Kidney (tissue), 22 donors: ENCODE measurements at regions of chr4 and their contacts with region 1.

Region 1: DNA sequence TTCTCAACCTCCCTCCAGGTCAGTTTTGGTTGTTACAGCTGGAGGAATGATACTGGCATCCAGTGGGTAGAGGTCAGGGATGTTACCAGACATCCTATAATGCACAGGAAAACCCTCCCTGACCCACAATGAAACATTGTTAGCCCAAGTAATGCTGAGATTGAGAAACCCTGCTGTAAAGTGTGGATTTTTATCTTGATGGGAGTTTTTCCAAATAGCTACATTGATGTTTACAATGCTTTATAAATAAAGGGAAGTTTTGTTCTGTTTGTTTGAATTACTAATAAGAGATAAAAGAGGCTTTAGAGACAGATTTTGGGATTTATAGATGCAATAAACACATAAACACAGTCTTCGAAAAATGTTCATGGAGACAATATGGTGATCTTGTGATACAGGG is 194.0 kb upstream of the NUDT6 start:
- DNase-seq: peak in 2 of 5 donors; percentile 31 to 60
- H3K4me3 ChIP-seq: no peak overlapping the region
- H3K27ac ChIP-seq: no peak overlapping the region
- H3K4me1 ChIP-seq: no peaks in the 10 kb centered on the region
- H3K27me3 ChIP-seq: no peaks in the 10 kb centered on the region
- CTCF ChIP-seq: no peak

Region 2: GRCh38 chr4:122827879-122828601 is 288.4 kb before region 1 on chr4:
- intact Hi-C with region 1: no loop called
- DNase-seq: peak in 3 of 5 donors; percentile 43 to 84 (median 75)
- H3K4me3 ChIP-seq: peak overlapping the region; percentile 70 to 72 (median 70)
- H3K27ac ChIP-seq: peak overlapping the region; percentile 39 to 48
- H3K4me1 ChIP-seq: peaks cover 0 to 2% (median 0%) of the 10 kb centered on the region in 3 donors
- H3K27me3 ChIP-seq: no peaks in the 10 kb centered on the region
- CTCF ChIP-seq: no peak

Region 3: DNA sequence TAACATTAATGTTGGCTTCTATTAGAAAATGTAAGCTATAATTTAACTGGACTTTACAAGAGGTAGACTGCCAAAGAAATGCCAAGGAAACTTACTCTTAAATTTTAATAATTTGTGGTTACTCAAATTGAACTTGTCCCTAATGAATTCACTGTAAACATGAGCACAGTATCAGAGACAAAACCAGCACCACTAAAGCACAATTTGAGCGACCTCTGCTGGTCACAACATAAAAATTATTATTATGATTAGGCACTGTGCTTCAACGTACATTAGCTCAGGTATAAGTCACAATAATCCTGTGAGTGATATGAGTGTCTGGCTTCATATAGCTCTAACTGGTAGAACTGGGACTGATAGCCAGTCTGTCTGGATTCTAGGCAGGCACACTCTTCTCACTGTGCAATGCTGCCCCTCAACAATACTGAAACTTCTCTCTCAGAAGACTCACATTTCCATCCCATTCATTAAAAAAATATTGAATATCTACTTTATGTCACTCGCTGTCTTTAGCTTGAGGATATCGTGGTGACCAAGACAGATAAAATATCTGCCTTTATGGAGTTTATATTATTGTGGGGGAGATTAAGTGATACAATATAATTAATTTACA is 202.0 kb before region 1 on chr4:
- intact Hi-C with region 1: no loop called
- DNase-seq: peak in 2 of 5 donors; percentile 74 to 75
- H3K4me3 ChIP-seq: no peak overlapping the region
- H3K27ac ChIP-seq: no peak overlapping the region
- H3K4me1 ChIP-seq: no peaks in the 10 kb centered on the region
- H3K27me3 ChIP-seq: no peaks in the 10 kb centered on the region
- CTCF ChIP-seq: peak; percentile 65

Region 4: GRCh38 chr4:124111922-124112321 is 995.5 kb after region 1 on chr4:
- intact Hi-C with region 1: loop called (anchors 10 kb)
- DNase-seq: peak in 4 of 5 donors; percentile 45 to 92 (median 78)
- H3K4me3 ChIP-seq: no peak overlapping the region
- H3K27ac ChIP-seq: no peak overlapping the region
- H3K4me1 ChIP-seq: no peaks in the 10 kb centered on the region
- H3K27me3 ChIP-seq: no peaks in the 10 kb centered on the region
- CTCF ChIP-seq: peak; percentile 60